Right cardiac atrium (tissue), 5 donors: ENCODE measurements at regions of chr3 and their contacts with region 1.

Region 1: GRCh38 chr3:45938864-45939263 is 4.4 kb upstream of the CXCR6 start:
- DNase-seq: peak; percentile 80 to 91 (median 84)
- ATAC-seq: peak; percentile 86 to 91
- H3K4me3 ChIP-seq: no peak overlapping the region
- H3K27ac ChIP-seq: no peak overlapping the region
- H3K4me1 ChIP-seq: peaks cover 4% of the 10 kb centered on the region
- H3K27me3 ChIP-seq: no peaks in the 10 kb centered on the region

Region 2: DNA sequence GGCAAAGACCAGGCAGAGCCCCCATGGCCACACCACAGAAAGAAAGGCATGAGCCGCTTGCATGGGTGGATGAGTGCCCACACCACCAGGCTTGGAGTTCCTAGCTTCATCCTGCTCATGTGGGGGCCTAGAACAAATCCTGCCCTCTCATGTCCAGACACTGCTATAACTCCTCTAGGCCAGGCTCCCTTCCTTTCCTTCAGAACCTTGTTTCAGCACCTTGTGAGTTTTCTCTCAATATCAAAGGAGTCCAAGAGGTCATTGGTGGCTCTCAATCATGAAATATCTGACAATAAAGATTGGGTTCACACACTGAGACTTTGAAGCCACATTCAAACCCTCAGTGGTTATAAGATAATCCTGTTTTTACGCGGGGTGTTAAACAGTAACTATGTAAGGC is 155.2 kb before region 1 on chr3:
- intact Hi-C with region 1: no loop called
- DNase-seq: no peak
- ATAC-seq: no peak
- H3K4me3 ChIP-seq: no peak overlapping the region
- H3K27ac ChIP-seq: no peak overlapping the region
- H3K4me1 ChIP-seq: no peaks in the 10 kb centered on the region
- H3K27me3 ChIP-seq: no peaks in the 10 kb centered on the region

Region 3: GRCh38 chr3:46078712-46079400 is 140.0 kb after region 1 on chr3:
- intact Hi-C with region 1: loop called (anchors 1 to 5 kb)
- DNase-seq: peak; percentile 83 to 94 (median 88)
- ATAC-seq: peak; percentile 94 to 97
- H3K4me3 ChIP-seq: no peak overlapping the region
- H3K27ac ChIP-seq: no peak overlapping the region
- H3K4me1 ChIP-seq: no peaks in the 10 kb centered on the region
- H3K27me3 ChIP-seq: no peaks in the 10 kb centered on the region

Region 4: GRCh38 chr3:46284981-46285683 is 346.3 kb after region 1 on chr3:
- intact Hi-C with region 1: no loop called
- DNase-seq: peak in 2 of 3 donors; percentile 21 to 62
- ATAC-seq: peak in 1 of 2 donors; percentile 72
- H3K4me3 ChIP-seq: no peak overlapping the region
- H3K27ac ChIP-seq: no peak overlapping the region
- H3K4me1 ChIP-seq: no peaks in the 10 kb centered on the region
- H3K27me3 ChIP-seq: no peaks in the 10 kb centered on the region

Region 5: GRCh38 chr3:46378426-46378942 is 439.6 kb after region 1 on chr3:
- intact Hi-C with region 1: loop called in 1 of 4 experiments (anchors 10 kb)
- DNase-seq: peak; percentile 66 to 83 (median 83)
- ATAC-seq: peak in 1 of 2 donors; percentile 58
- H3K4me3 ChIP-seq: no peak overlapping the region
- H3K27ac ChIP-seq: no peak overlapping the region
- H3K4me1 ChIP-seq: no peaks in the 10 kb centered on the region
- H3K27me3 ChIP-seq: no peaks in the 10 kb centered on the region